ENCODE measurements at regions of chr1 and their contacts with region 1.

Region 1: GRCh38 chr1:178093205-178093957 is 523 bp upstream of the RASAL2 start:
- DNase-seq: peak; percentile 95
- H3K4me3 ChIP-seq: peak overlapping the region; percentile 85 to 99 (median 87)
- H3K27ac ChIP-seq: peak overlapping the region; percentile 79
- H3K4me1 ChIP-seq: peaks cover 31% of the 10 kb centered on the region
- H3K27me3 ChIP-seq: no peaks in the 10 kb centered on the region
- CTCF ChIP-seq: peak in 1 of 2 donors; percentile 18

Region 2: DNA sequence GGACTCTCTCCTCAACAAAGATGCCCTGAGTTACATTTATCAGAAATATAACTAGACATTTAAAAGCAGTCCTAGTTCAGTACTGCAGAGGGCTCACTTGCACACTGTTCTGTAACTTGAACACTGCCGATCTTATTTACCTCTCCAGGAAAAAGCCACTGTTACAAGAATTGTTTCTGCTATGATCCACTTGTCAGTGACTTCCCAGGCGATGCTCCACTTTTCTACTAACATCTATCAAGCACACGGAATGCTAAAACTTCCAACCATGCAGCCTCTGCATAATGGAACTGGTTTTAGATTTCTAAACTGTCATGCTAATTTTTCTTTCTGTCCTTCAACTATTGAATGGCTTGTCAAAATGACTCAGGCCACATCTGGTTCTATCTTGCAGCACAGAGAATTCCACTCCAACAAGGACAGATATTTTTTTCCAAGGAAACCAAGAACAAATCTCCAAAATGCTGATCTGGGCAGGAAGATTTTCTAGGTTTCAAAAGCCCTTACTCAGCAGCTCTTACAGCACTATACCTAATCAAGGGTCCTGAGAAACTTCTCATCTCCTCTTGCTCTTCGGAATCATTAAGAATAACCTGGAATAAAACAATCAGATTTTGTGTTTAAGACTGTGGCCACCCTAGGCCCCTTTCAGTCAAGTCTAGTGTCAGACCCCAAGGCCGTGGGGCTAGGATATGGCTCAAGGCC is 133.4 kb before region 1 on chr1:
- CTCF ChIA-PET with region 1: no interaction called
- dilution Hi-C with region 1: no loop called
- in situ Hi-C with region 1: no loop called
- intact Hi-C with region 1: loop called (anchors 2 kb)
- DNase-seq: peak; percentile 33
- H3K4me3 ChIP-seq: no peak overlapping the region
- H3K27ac ChIP-seq: no peak overlapping the region
- H3K4me1 ChIP-seq: no peaks in the 10 kb centered on the region
- H3K27me3 ChIP-seq: no peaks in the 10 kb centered on the region
- CTCF ChIP-seq: peak; percentile 44 to 53

Region 3: DNA sequence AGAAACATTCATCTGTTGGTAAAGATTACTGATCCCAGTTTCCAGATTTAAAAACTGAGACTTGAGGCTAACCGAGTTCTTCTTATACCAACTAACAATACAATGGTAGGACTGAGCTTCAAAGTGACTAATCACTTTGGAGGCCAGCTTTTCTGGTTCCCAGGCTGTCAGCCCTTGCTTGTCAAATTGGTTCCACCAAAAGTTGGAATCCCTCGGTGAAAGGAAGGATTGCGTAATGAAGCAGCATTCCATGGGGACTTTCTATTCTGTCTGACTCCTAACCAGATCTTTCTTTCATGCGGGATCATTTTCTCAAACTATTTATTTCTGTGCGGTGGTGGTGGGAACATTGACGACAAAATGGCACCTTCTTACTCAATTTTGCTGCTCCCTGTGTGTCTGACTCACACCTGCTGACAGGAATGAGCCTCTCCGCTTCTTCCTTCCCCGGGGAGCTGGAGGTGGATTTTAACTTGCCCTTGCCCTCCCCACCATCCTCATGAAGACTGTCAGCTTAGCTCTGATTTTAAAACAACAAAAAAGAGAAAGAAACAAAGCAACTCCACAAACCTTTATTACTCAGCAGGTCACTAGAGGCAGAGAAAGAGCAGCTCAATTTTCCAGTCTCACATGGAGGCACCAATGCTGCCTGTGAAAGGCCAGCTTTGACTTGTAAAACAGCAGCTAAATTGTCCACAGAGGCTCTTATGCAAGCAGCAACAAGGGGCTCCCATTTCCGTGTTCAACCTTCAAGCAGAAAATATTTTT is 32.4 kb before region 1 on chr1:
- CTCF ChIA-PET with region 1: no interaction called
- dilution Hi-C with region 1: no loop called
- in situ Hi-C with region 1: no loop called
- intact Hi-C with region 1: no loop called
- DNase-seq: peak; percentile 70
- H3K4me3 ChIP-seq: no peak overlapping the region
- H3K27ac ChIP-seq: peak overlapping the region; percentile 17
- H3K4me1 ChIP-seq: peaks cover 27% of the 10 kb centered on the region
- H3K27me3 ChIP-seq: no peaks in the 10 kb centered on the region
- CTCF ChIP-seq: peak in 1 of 2 donors; percentile 9

Region 4: GRCh38 chr1:178126790-178127189 is 33.4 kb after region 1 on chr1:
- CTCF ChIA-PET with region 1: no interaction called
- dilution Hi-C with region 1: no loop called
- in situ Hi-C with region 1: no loop called
- intact Hi-C with region 1: loop called (anchors 1 kb)
- DNase-seq: peak; percentile 97
- H3K4me3 ChIP-seq: peak overlapping the region in 1 of 3 experiments; percentile 50
- H3K27ac ChIP-seq: peak overlapping the region; percentile 99
- H3K4me1 ChIP-seq: peaks cover 55% of the 10 kb centered on the region
- H3K27me3 ChIP-seq: no peaks in the 10 kb centered on the region
- CTCF ChIP-seq: no peak

Region 5: GRCh38 chr1:178189814-178190213 is 96.4 kb after region 1 on chr1:
- CTCF ChIA-PET with region 1: no interaction called
- dilution Hi-C with region 1: no loop called
- in situ Hi-C with region 1: no loop called
- intact Hi-C with region 1: loop called (anchors 2 kb)
- DNase-seq: no peak
- H3K4me3 ChIP-seq: no peak overlapping the region
- H3K27ac ChIP-seq: peak overlapping the region; percentile 0
- H3K4me1 ChIP-seq: peaks cover 9% of the 10 kb centered on the region
- H3K27me3 ChIP-seq: no peaks in the 10 kb centered on the region
- CTCF ChIP-seq: peak; percentile 51 to 67

Region 6: GRCh38 chr1:178238722-178239510 is 145.5 kb after region 1 on chr1:
- CTCF ChIA-PET with region 1: no interaction called
- dilution Hi-C with region 1: no loop called
- in situ Hi-C with region 1: no loop called
- intact Hi-C with region 1: loop called (anchors 5 kb)
- DNase-seq: peak; percentile 99
- H3K4me3 ChIP-seq: peak overlapping the region in 1 of 3 experiments; percentile 17
- H3K27ac ChIP-seq: peak overlapping the region; percentile 100
- H3K4me1 ChIP-seq: peaks cover 55% of the 10 kb centered on the region
- H3K27me3 ChIP-seq: no peaks in the 10 kb centered on the region
- CTCF ChIP-seq: no peak

Measured in mammary epithelial cell (primary cell).